Ascending aorta (tissue), 2 donors: ENCODE measurements at regions of chr13 and their contacts with region 1.

Region 1: DNA sequence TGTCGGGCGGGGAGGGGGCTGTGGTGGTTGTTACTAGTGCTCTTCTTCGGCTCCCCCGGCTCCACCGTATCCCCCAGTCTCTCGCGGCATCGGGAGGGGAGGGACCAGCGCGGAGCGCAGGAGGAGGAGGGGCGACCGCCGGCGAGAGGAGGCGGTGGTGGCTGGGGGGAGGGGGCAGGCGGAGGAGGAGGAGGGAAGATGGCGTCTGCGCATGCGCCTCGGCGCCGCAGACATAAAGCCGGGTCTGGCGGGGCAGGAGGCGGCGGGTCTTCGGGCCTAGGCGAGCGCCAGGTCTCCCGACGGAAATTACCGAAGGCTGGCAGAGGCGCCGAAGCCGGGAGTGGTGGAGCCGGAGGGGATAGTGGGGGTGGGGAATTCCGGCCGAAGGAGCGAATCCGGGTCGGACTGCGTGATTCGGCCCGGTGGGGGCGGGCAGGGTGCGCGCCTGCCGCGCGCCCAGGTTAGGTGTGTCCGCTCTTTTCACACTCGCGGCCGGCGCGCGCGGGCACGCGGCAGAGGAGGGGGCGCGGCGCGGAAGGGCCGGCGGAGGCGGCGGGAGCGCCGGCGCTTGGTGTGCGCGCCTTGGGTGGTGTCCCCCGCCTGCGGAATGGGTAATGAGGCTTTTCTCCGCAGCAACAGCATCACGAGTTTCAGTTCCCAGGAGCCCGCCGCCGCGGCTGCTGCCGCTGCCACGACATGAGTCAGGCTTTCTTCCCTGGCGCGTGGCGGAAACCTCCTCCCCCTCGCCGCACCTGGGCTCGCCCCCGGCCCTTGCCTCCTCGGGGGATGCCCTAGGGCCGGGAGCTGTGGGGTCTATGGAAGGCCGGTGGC is 1.3 kb upstream of the TSC22D1 start:
- DNase-seq: peak; percentile 84 to 97
- H3K4me3 ChIP-seq: peak overlapping the region; percentile 66 to 97
- H3K27ac ChIP-seq: peak overlapping the region; percentile 98
- H3K4me1 ChIP-seq: peaks cover 10 to 21% of the 10 kb centered on the region in 2 donors
- H3K27me3 ChIP-seq: no peaks in the 10 kb centered on the region
- CTCF ChIP-seq: peak in 1 of 3 experiments; percentile 20

Region 2: DNA sequence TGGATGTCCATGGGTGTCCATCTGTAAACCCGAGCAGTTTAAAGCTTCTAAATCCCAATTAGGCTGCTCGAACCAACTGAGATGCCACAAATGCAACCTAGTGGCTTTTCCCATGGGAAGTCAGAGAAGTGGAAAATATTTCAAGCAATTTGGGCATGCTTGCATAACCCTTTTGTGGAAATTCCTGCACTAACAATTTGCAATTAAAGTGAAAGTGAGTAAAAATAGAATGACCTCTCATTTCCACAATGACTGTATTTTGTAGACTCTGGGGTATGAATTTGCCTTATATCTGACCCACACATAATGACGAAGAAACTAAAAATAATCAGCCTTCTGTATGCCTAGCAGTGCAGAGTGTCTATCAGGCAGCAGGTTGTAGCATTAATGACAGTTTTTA is 90.5 kb after region 1 on chr13:
- intact Hi-C with region 1: loop called (anchors 2 kb)
- DNase-seq: no peak
- H3K4me3 ChIP-seq: peak overlapping the region in 1 of 2 donors; percentile 37
- H3K27ac ChIP-seq: peak overlapping the region; percentile 6 to 60
- H3K4me1 ChIP-seq: peaks cover 0 to 12% of the 10 kb centered on the region in 2 donors
- H3K27me3 ChIP-seq: no peaks in the 10 kb centered on the region
- CTCF ChIP-seq: no peak

Region 3: GRCh38 chr13:44810061-44810840 is 232.8 kb after region 1 on chr13:
- intact Hi-C with region 1: loop called (anchors 5 kb)
- DNase-seq: peak in 1 of 2 donors; percentile 73
- H3K4me3 ChIP-seq: no peak overlapping the region
- H3K27ac ChIP-seq: peak overlapping the region; percentile 4 to 57
- H3K4me1 ChIP-seq: peaks cover 3 to 28% of the 10 kb centered on the region in 2 donors
- H3K27me3 ChIP-seq: no peaks in the 10 kb centered on the region
- CTCF ChIP-seq: no peak

Region 4: DNA sequence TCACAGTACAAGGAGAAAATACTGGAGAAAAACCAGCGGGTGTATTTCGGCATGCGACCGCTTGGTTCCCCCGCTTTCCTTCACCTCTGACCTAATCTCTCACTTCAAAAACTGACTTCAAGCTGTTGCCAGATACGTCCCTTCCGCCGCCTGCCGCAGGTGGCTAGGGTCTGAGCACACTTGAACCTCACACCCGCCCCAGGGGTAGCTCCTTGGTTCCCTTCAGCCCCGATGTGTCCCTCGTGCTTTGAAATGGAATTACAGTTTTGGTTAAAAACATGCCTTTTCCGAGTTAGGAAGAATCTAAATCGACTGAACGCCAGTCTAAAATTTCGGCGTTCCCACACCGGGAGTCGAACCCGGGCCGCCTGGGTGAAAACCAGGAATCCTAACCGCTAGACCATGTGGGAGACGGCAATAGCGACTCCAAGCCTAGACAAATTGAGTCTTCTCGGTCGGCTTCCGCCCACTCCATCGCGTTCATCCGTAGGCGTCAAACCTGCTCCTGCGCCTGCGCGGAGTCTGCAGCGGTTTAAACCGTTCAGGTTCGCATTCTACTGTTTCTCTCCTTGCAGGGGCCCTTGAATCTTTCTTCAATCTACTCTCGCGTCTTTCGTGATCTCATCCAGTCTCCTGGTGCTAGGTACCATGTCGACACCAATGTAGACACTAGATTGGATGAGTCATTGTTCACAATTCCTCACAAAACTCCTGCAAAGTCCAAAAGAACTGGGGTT is 340.3 kb after region 1 on chr13:
- intact Hi-C with region 1: loop called (anchors 1 kb)
- DNase-seq: peak; percentile 82 to 97
- H3K4me3 ChIP-seq: peak overlapping the region; percentile 42 to 60
- H3K27ac ChIP-seq: peak overlapping the region; percentile 98
- H3K4me1 ChIP-seq: peaks cover 21 to 38% of the 10 kb centered on the region in 2 donors
- H3K27me3 ChIP-seq: no peaks in the 10 kb centered on the region
- CTCF ChIP-seq: peak; percentile 53 to 81 (median 62)

Region 5: DNA sequence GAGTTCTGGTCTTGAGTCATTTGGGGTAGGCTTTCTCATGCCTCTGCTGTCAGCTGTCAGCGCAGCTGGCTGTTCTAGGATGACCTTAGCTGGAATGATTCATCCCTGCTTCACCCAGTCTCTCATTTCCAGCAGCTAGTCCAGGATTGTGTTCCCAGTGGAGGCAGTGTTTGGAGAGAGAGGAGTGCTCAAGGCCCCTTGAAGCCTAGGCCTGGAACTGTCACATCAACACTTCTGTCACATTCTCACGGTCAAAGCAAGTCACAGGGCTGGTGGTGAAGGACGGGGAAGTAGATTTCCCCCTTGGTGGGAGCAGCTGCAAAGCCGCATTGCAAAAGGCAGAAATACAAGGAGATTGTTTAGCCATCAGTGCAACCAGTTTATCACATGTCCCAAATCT is 748.4 kb after region 1 on chr13:
- intact Hi-C with region 1: loop called (anchors 10 kb)
- DNase-seq: peak; percentile 39 to 88
- H3K4me3 ChIP-seq: no peak overlapping the region
- H3K27ac ChIP-seq: peak overlapping the region; percentile 68 to 91
- H3K4me1 ChIP-seq: peaks cover 15 to 40% of the 10 kb centered on the region in 2 donors
- H3K27me3 ChIP-seq: no peaks in the 10 kb centered on the region
- CTCF ChIP-seq: no peak